AG04449 (cell line): ENCODE measurements at regions of chr16 and their contacts with region 1.

Region 1: DNA sequence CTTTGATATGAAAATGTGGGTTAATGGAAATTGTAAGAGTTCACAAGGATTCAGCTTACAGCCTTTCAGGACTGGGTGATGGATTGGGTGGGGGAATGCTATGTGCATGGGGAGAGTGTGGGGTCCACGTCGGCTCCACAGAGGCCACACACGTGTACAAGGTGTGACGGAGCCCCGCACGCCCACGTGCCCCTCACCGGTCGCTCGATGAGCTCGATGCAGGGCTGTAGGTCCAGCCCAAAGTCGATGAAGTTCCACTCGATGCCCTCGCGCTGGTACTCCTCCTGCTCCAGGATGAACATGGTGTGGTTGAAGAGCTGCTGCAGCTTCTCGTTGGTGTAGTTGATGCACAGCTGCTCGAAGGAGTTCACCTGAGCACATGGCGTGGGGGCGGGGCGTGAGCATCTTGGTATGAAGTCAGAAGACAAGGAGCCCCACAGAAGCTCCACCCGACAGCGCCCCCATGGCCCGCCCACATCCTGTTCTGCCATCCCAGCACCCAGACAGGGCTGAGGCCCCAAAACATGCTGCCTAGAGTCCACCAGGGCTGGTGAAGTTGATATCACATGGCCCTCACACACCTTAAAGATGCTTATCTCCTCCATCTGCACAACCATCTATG is 99.1 kb downstream of the MYH11 start:
- DNase-seq: no peak
- H3K4me3 ChIP-seq: no peak overlapping the region
- CTCF ChIP-seq: no peak

Region 2: DNA sequence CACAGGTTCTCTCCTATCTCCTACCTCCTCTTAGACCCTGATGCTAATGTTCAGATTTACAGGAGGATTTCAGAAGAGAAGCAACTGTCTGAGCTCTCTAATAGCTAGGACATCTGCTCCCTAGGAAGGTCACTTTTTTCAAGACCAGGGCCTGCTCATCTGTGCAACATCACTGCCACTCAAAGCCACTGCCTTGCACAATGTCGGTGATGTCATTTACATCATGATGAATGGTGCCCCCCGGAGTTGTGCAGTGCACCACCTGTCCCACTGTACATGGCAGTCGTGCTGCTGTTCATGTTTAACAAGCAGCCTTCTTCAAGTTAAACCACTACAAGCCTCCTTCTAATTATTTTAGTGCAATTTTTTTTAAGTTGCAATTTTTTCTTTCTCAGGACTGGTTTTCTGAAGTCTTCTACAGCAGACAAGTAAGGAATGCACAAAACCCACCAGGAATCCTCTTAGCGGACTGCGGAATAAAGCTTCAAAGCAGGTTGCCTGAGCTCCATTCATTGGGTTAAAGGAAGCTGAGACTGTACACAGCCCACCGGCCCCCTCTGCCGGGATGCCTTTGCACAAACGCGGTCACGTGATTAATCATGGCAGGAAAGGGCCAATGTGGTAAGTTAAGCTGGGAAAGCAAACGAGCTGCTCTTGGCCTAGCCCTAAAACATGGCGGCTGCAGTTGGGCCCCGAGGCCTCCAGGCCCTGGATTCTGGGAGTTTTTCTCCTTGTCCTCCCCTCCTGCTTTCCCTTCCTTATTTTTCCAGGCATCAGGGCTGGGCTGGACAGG is 25.0 kb after region 1 on chr16:
- CTCF ChIA-PET with region 1: interaction called, 10 read pairs
- POLR2A ChIA-PET with region 1: no interaction called
- DNase-seq: no peak
- H3K4me3 ChIP-seq: no peak overlapping the region
- CTCF ChIP-seq: no peak